ENCODE measurements at regions of chr1 and their contacts with region 1.

Region 1: GRCh38 chr1:179809506-179810366 is 66.6 kb downstream of the FAM163A start:
- DNase-seq: no peak
- H3K4me3 ChIP-seq: no peak overlapping the region
- H3K27ac ChIP-seq: no peak overlapping the region
- H3K4me1 ChIP-seq: peaks cover 0 to 20% (median 6%) of the 10 kb centered on the region in 3 donors
- H3K27me3 ChIP-seq: peaks cover 0 to 30% (median 0%) of the 10 kb centered on the region in 4 donors
- CTCF ChIP-seq: peak; percentile 63 to 89 (median 86)
- POLR2A ChIP-seq: no peak

Region 2: GRCh38 chr1:179706339-179706941 is 103.3 kb before region 1 on chr1:
- intact Hi-C with region 1: loop called (anchors 5 kb)
- DNase-seq: no peak
- H3K4me3 ChIP-seq: no peak overlapping the region
- H3K27ac ChIP-seq: no peak overlapping the region
- H3K4me1 ChIP-seq: peaks cover 0 to 17% (median 0%) of the 10 kb centered on the region in 3 donors
- H3K27me3 ChIP-seq: no peaks in the 10 kb centered on the region
- CTCF ChIP-seq: peak; percentile 58 to 76 (median 69)
- POLR2A ChIP-seq: no peak

Region 3: DNA sequence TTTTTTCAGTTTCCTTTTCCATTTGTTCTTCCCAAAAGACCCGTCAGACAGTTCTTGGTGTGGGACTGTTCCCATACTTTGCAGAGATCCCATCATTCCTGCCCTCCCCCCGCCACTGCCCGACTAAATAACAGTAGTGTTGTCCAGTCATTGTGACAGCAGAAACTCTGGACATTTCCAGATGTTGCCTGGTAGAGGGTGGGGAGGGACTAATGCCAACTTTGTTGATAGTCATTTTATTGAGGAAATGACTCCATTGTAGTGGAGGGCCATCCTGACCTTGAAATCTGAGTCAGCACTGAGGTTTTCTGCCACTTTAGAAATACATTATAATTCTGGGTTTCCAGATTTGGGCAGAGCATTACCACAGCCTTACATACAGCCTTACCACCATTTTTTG is 230.3 kb after region 1 on chr1:
- intact Hi-C with region 1: no loop called
- DNase-seq: no peak
- H3K4me3 ChIP-seq: no peak overlapping the region
- H3K27ac ChIP-seq: no peak overlapping the region
- H3K4me1 ChIP-seq: no peaks in the 10 kb centered on the region
- H3K27me3 ChIP-seq: no peaks in the 10 kb centered on the region
- CTCF ChIP-seq: no peak
- POLR2A ChIP-seq: no peak